ENCODE measurements at regions of chr3 and their contacts with region 1.

Region 1: DNA sequence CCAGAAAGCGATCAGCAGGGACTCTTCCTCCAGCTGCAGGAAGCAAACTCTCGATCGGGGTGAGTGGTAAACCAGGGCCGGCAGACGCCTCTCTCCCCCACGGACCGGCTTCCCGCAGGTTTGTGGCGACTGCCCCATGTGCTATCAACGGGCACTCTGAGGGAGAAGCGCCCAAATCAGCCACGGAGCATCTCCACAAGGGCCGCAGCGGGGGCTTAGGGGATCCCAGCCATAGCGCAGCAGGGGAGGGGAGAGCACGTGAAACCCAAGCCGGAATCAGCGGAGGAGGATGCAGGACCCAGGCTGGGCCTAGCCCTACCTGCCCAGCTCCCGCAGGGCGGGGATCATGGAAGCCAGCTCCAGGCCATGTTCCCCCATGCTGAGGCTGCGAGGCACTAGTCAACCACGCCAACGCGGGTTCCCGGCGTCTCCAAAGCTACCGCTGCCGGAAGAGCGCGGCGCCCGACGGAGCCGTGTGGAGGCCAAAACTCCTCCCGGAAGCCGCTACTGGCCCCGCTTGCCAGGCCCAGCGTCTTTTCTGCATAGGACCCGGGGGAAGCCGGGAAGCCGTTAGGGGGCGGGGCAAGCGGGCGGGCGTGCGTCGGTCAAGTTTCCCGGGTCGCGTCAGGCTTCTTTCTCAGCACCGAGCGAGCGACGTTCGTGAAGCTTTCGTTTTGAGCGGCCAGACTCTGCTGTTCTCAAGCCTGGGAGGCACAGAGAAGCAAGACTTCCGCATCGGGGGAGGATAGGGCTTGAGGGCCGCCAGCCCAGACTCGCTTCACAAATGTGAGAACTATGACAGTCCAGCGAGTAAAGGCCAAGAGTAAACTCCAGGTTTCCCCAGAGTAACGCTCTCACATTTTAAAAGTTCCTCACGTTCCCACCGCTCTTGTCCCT is at the start of gene ATR:
- DNase-seq: peak; percentile 95
- ATAC-seq: peak; percentile 95
- H3K4me3 Mint-ChIP-seq: peak within 1 kb of the TSS; percentile 99
- H3K27ac Mint-ChIP-seq: peak within 1 kb of the TSS; percentile 99
- H3K4me1 Mint-ChIP-seq: peaks cover 37% of the 10 kb centered on the region
- H3K27me3 Mint-ChIP-seq: peaks cover 10% of the 10 kb centered on the region
- total RNA-seq, gene ATR: 36.2 to 36.9 TPM

Region 2: DNA sequence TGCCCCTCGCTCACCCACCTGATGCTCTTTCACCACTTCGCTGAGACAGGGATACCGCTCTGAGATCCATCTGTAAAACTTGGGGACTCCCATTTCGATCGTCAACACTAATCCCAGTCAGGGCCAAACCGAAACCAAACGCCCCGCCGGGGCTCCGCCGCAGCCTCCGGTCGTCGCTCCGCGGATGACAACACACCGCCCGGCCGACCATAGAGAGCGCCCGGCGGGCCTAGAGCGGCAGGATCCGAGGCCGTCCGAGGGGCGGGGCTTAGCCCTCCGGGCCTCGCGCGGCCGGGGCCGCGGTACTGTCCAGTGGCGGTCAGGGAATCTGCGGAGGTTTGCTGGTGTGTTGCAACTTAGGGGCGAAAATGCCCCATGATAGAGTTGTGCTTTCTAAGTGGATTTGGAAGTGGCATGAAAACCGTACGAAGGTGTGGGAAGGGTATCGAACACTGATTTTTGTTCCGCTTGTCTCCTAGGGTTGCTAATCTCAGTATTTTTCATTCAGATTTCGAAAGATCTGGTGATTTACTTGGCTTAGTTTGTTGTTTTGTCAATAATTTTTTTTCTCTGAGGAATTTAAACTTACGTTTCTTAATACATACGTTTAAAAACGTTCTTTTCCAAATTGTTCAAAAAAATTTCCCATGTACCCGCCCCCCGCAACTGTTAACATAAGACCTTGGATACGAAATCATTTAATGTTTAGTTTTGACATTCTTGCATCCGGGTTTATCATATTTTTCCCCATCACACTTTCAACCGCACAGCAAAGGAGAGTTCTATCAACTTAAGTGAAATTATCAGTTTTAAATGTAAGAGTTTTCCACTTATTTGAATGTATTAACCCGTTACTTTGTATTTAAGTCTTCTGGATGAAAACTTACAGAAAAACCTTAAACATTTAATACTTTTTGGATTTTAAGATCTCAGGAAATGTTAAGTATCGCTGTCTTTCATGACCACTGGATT is 130.4 kb before region 1 on chr3 and contains the start of gene XRN1:
- POLR2A ChIA-PET with region 1: interaction called, 17 read pairs
- DNase-seq: peak; percentile 97
- ATAC-seq: peak; percentile 91
- H3K4me3 Mint-ChIP-seq: peak within 1 kb of the TSS; percentile 88
- H3K27ac Mint-ChIP-seq: peak within 1 kb of the TSS; percentile 97
- H3K4me1 Mint-ChIP-seq: peaks cover 23% of the 10 kb centered on the region
- H3K27me3 Mint-ChIP-seq: no peaks in the 10 kb centered on the region
- total RNA-seq, gene XRN1: 88.8 to 89.8 TPM

Region 3: DNA sequence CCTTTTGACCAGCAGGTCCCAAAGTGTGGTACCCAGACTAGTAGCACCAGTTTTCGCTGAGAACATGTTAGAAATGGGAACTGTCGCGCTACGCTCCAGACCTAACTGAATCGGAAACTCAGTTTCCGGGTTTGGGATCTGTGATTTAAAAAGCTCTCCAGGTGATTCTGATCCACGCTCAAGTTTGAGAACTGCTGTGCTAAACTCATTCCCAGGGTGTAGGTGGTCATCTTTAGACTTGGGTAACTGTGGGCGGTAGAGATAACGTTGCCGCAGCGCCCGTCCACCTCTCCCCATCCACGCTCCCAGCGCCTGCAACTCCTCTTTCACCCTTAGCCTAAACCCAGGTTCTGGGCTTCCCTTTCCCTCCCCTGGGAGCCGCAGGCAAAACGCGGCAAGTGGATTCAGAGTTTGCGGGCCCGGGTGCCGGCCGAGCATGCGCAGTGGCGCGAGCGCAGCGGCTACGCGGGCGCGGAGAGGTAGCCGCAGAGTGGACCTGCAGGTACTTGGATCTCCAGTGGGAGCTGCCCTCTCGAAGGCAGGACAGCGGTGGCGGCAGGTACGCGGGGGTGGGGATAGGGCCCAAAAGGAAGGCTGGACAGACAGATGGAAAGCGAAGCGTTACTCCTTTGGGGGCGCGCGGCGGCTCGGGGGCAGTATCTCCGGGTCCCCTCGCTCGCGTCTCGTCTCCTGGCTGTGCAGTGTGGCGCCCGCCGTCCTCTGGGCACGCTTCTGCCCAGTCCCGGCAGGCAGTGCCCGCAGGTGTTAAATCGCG is 17.6 kb after region 1 on chr3 and contains the start of gene PLS1:
- POLR2A ChIA-PET with region 1: interaction called, 14 read pairs
- DNase-seq: peak; percentile 93
- ATAC-seq: peak; percentile 89
- H3K4me3 Mint-ChIP-seq: peak within 1 kb of the TSS; percentile 96
- H3K27ac Mint-ChIP-seq: peak within 1 kb of the TSS; percentile 72
- H3K4me1 Mint-ChIP-seq: peaks cover 18% of the 10 kb centered on the region
- H3K27me3 Mint-ChIP-seq: peaks cover 10% of the 10 kb centered on the region
- total RNA-seq, gene PLS1: 2.6 to 3.1 TPM

Region 4: DNA sequence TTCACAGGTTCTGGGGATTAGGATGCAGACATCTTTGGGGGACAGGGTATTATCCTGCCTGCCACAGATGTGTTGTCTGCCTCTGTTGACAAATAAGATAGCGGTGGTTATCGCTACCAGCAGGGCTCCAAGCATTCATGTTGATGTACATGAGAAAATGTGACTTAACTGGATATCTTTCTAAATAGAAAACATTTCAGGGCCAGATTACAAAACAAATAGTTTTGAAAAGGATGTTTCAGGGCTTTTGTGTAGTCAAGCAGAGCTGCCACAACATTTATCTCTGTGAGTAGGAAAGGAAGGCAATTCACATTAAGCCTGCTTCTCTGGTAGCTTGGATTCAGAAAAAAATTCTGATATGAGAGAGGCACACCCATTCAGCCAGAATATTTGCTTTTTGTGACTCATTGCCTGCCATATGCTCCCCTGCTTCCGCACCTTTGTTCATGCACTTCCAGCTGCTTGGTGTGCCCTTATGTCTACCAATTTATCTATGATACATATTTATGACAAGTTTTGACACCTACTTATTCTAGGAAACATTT is 40.4 kb after region 1 on chr3:
- POLR2A ChIA-PET with region 1: no interaction called
- DNase-seq: no peak
- ATAC-seq: no peak
- H3K4me3 Mint-ChIP-seq: no peak overlapping the region
- H3K27ac Mint-ChIP-seq: no peak overlapping the region
- H3K4me1 Mint-ChIP-seq: no peaks in the 10 kb centered on the region
- H3K27me3 Mint-ChIP-seq: peaks cover 2% of the 10 kb centered on the region

Region 5: DNA sequence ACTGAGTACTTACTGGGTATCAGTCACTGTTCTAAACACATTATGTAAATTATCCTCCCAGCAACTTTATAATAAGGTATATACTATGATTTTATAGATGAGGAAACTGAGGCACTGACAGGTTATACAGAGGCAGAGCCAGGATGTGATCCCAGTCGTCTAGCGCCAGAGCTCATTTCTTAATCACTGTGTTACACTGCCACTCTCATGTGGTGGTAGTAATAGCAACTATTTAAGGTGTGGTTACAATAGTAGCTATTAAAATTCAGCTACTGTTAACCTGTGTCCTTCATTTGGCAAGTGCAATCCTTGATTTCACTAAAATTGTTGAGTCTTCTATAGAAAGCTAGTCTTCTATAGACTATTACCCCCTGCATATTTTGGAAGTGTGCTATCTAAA is 102.1 kb after region 1 on chr3:
- POLR2A ChIA-PET with region 1: no interaction called
- DNase-seq: no peak
- ATAC-seq: no peak
- H3K4me3 Mint-ChIP-seq: no peak overlapping the region
- H3K27ac Mint-ChIP-seq: no peak overlapping the region
- H3K4me1 Mint-ChIP-seq: no peaks in the 10 kb centered on the region
- H3K27me3 Mint-ChIP-seq: no peaks in the 10 kb centered on the region

Region 6: GRCh38 chr3:143001369-143002082 is 423.0 kb after region 1 on chr3 and contains the start of gene U2SURP:
- POLR2A ChIA-PET with region 1: interaction called, 24 read pairs
- DNase-seq: peak; percentile 86
- ATAC-seq: peak; percentile 88
- H3K4me3 Mint-ChIP-seq: peak within 1 kb of the TSS; percentile 91
- H3K27ac Mint-ChIP-seq: peak within 1 kb of the TSS; percentile 99
- H3K4me1 Mint-ChIP-seq: peaks cover 21% of the 10 kb centered on the region
- H3K27me3 Mint-ChIP-seq: peaks cover 2% of the 10 kb centered on the region
- total RNA-seq, gene U2SURP: 134 to 147 TPM

Measured in activated naive CD8-positive, alpha-beta T cell treated with anti-CD3 and anti-CD28 coated beads, Interleukin-2, amount 10 ng/mL, durations not matched to agents 7 days and 5 days (primary cell).